ENCODE measurements at regions of chr1 and their contacts with region 1.

Region 1: GRCh38 chr1:160726498-160727315 is 12.3 kb upstream of the SLAMF7 start:
- DNase-seq: peak; percentile 88
- ATAC-seq: peak; percentile 93
- H3K4me3 ChIP-seq: peak overlapping the region in 1 of 5 experiments; percentile 17
- H3K4me3 Mint-ChIP-seq: no peak overlapping the region
- H3K27ac ChIP-seq: no peak overlapping the region
- H3K27ac Mint-ChIP-seq: no peak overlapping the region
- H3K4me1 ChIP-seq: peaks cover 8 to 12% of the 10 kb centered on the region in 2 donors
- H3K4me1 Mint-ChIP-seq: peaks cover 10% of the 10 kb centered on the region
- H3K27me3 ChIP-seq: no peaks in the 10 kb centered on the region
- H3K27me3 Mint-ChIP-seq: no peaks in the 10 kb centered on the region
- CTCF ChIP-seq: peak; percentile 99

Region 2: GRCh38 chr1:160711602-160712311 is 14.9 kb before region 1 on chr1 and contains the start of gene CD48:
- CTCF ChIA-PET with region 1: interaction called, 49 read pairs
- POLR2A ChIA-PET with region 1: interaction called, 5 read pairs
- intact Hi-C with region 1: loop called (anchors 2 kb)
- DNase-seq: peak; percentile 80
- ATAC-seq: peak; percentile 54
- H3K4me3 ChIP-seq: peak within 1 kb of the TSS; percentile 87 to 100 (median 98)
- H3K4me3 Mint-ChIP-seq: no peak within 1 kb of the TSS
- H3K27ac ChIP-seq: peak within 1 kb of the TSS; percentile 89 to 95
- H3K27ac Mint-ChIP-seq: no peak within 1 kb of the TSS
- H3K4me1 ChIP-seq: peaks cover 62 to 64% of the 10 kb centered on the region in 2 donors
- H3K4me1 Mint-ChIP-seq: peaks cover 26% of the 10 kb centered on the region
- H3K27me3 ChIP-seq: no peaks in the 10 kb centered on the region
- H3K27me3 Mint-ChIP-seq: no peaks in the 10 kb centered on the region
- CTCF ChIP-seq: no peak
- total RNA-seq, gene CD48: 252 and 255 TPM in 2 replicates

Region 3: DNA sequence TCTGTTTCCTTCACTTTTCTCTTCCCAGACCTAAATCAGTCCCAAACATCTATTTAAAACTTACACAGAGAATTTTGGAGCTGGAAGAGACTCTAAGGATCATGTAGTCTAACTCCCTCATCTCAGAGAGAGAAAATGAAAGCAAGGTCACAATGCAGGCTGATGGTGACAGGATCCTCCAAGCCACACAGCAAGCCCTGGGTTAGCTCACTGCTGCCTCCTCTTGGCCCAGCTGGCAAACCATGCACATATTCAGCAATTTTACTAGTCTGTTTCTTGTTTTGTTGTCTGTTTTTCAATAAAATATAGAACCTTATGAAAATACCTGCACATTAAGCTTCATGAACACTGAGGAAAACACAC is 41.6 kb after region 1 on chr1:
- CTCF ChIA-PET with region 1: interaction called, 134 read pairs
- POLR2A ChIA-PET with region 1: no interaction called
- intact Hi-C with region 1: loop called (anchors 1 kb)
- DNase-seq: peak; percentile 87
- ATAC-seq: peak; percentile 98
- H3K4me3 ChIP-seq: peak overlapping the region in 4 of 5 experiments; percentile 20 to 64 (median 43)
- H3K4me3 Mint-ChIP-seq: peak overlapping the region; percentile 83
- H3K27ac ChIP-seq: peak overlapping the region; percentile 39 to 68
- H3K27ac Mint-ChIP-seq: peak overlapping the region; percentile 85
- H3K4me1 ChIP-seq: peaks cover 11 to 18% of the 10 kb centered on the region in 2 donors
- H3K4me1 Mint-ChIP-seq: peaks cover 29% of the 10 kb centered on the region
- H3K27me3 ChIP-seq: no peaks in the 10 kb centered on the region
- H3K27me3 Mint-ChIP-seq: no peaks in the 10 kb centered on the region
- CTCF ChIP-seq: peak; percentile 74

Region 4: DNA sequence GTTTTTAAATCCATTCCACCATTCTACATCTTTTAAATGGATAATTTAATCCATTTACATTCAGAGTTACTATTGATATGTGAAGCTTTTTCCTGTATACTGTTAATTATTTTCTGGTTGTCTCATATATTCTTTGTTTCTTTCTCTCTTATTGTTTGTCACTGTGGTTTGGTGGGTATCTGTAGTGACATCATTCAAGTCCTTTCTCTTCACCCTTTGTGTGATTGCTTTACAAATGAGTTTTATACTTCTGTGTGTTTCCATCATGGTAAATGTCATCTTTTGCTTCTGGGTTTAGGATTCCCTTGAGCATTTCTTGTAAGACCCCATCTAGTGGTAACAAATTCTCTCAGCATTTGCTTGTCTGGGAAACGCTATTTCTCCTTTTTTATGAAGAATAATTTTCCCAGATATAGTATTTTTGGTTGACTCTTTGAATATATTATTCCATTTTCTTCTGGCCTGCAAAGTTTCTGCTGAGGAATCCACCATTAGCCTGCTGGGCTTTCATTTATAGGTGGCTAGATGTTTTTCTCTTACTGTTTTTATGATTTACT is 79.5 kb after region 1 on chr1:
- CTCF ChIA-PET with region 1: interaction called, 11 read pairs
- POLR2A ChIA-PET with region 1: interaction called, 4 read pairs
- intact Hi-C with region 1: no loop called
- DNase-seq: no peak
- ATAC-seq: no peak
- H3K4me3 ChIP-seq: no peak overlapping the region
- H3K4me3 Mint-ChIP-seq: peak overlapping the region; percentile 74
- H3K27ac ChIP-seq: peak overlapping the region in 1 of 2 donors; percentile 20
- H3K27ac Mint-ChIP-seq: peak overlapping the region; percentile 60
- H3K4me1 ChIP-seq: peaks cover 9 to 13% of the 10 kb centered on the region in 2 donors
- H3K4me1 Mint-ChIP-seq: peaks cover 74% of the 10 kb centered on the region
- H3K27me3 ChIP-seq: no peaks in the 10 kb centered on the region
- H3K27me3 Mint-ChIP-seq: no peaks in the 10 kb centered on the region
- CTCF ChIP-seq: no peak

Region 5: DNA sequence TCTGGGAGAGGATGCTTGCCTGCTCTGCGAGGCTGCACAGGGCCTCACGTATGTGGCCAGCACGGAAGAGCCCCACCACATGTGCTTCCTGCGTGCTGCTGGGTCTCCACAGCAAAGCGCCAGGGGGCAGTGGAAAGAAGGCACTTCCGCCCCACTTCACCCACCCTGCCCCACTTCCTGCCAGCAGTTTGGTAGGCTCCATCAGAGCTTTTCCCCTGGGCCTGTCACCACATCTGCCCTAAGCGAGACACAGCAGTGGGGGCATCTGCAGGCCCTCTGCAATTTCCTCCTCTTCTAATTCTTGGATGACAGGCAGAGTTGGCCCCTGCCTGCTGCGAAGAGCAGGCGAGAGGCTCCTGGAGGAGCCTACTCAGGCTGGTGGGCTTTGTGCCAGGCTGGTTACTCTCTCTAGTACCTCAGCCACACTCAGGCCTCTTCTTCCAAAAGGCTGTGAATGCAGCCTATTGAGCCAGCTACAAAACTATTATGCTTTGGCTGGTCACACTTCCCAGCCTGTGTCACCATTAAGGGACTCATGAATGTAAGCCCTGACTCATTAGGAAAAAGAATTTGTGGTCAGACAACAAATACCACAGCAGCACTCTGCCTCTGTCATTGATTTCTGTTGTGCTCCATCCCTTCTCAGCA is 111.0 kb after region 1 on chr1:
- CTCF ChIA-PET with region 1: interaction called, 35 read pairs
- POLR2A ChIA-PET with region 1: no interaction called
- intact Hi-C with region 1: no loop called
- DNase-seq: peak; percentile 91
- ATAC-seq: peak; percentile 97
- H3K4me3 ChIP-seq: peak overlapping the region in 1 of 5 experiments; percentile 30
- H3K4me3 Mint-ChIP-seq: peak overlapping the region; percentile 41
- H3K27ac ChIP-seq: peak overlapping the region; percentile 71 to 72
- H3K27ac Mint-ChIP-seq: peak overlapping the region; percentile 90
- H3K4me1 ChIP-seq: peaks cover 33 to 34% of the 10 kb centered on the region in 2 donors
- H3K4me1 Mint-ChIP-seq: peaks cover 41% of the 10 kb centered on the region
- H3K27me3 ChIP-seq: no peaks in the 10 kb centered on the region
- H3K27me3 Mint-ChIP-seq: no peaks in the 10 kb centered on the region
- CTCF ChIP-seq: peak; percentile 65